A673 (cell line): ENCODE measurements at regions of chr12 and their contacts with region 1.

Region 1: DNA sequence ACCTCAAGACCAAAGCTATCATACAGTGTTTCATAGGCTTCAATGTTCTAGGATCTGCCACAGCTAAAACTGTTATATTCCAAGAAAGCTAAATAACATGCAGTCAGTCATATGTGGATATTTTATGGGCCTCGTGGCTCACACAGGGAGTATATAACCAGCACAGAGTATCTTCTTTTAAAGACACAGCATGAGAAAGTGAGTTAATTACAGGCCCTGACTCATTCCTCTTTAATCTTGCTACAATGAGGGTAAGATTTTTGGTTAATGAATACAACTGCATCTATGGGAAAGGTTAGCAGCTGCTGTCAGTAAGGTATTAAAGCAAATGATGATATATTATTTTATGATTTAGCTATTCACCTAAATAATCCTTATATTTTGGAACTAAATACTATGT is 111.0 kb downstream of the TRAFD1 start:
- DNase-seq: peak; percentile 15
- H3K4me3 ChIP-seq: no peak overlapping the region
- H3K27ac ChIP-seq: no peak overlapping the region
- H3K4me1 ChIP-seq: no peaks in the 10 kb centered on the region
- H3K27me3 ChIP-seq: no peaks in the 10 kb centered on the region
- CTCF ChIP-seq: no peak

Region 2: DNA sequence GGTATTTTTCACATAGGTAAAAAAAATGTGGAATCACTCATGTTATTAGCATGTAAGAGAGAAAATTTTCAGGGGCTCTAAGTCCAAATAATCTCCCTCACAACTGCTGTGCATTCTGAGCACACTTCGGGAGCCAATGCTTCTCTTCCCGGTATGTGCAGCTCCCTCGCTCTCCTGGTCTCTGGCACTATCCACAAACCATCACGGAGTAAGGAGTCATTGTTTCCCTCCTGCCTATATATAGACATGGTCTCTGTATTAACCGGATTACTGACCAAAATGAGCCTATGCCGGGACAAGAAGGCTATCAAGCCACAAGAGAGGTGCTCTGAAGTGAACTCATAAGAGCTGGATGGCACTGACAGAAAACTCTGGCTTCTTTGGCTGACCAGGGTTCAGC is 132.5 kb after region 1 on chr12:
- CTCF ChIA-PET with region 1: no interaction called
- POLR2A ChIA-PET with region 1: interaction called, 13 read pairs
- intact Hi-C with region 1: no loop called
- DNase-seq: no peak
- H3K4me3 ChIP-seq: no peak overlapping the region
- H3K27ac ChIP-seq: no peak overlapping the region
- H3K4me1 ChIP-seq: no peaks in the 10 kb centered on the region
- H3K27me3 ChIP-seq: no peaks in the 10 kb centered on the region
- CTCF ChIP-seq: no peak

Region 3: GRCh38 chr12:112535017-112535416 is 298.6 kb after region 1 on chr12:
- CTCF ChIA-PET with region 1: no interaction called
- POLR2A ChIA-PET with region 1: no interaction called
- intact Hi-C with region 1: no loop called
- DNase-seq: no peak
- H3K4me3 ChIP-seq: no peak overlapping the region
- H3K27ac ChIP-seq: no peak overlapping the region
- H3K4me1 ChIP-seq: peaks cover 6% of the 10 kb centered on the region
- H3K27me3 ChIP-seq: no peaks in the 10 kb centered on the region
- CTCF ChIP-seq: no peak